Gastrocnemius medialis (tissue), 4 donors: ENCODE measurements at regions of chr6 and their contacts with region 1.

Region 1: DNA sequence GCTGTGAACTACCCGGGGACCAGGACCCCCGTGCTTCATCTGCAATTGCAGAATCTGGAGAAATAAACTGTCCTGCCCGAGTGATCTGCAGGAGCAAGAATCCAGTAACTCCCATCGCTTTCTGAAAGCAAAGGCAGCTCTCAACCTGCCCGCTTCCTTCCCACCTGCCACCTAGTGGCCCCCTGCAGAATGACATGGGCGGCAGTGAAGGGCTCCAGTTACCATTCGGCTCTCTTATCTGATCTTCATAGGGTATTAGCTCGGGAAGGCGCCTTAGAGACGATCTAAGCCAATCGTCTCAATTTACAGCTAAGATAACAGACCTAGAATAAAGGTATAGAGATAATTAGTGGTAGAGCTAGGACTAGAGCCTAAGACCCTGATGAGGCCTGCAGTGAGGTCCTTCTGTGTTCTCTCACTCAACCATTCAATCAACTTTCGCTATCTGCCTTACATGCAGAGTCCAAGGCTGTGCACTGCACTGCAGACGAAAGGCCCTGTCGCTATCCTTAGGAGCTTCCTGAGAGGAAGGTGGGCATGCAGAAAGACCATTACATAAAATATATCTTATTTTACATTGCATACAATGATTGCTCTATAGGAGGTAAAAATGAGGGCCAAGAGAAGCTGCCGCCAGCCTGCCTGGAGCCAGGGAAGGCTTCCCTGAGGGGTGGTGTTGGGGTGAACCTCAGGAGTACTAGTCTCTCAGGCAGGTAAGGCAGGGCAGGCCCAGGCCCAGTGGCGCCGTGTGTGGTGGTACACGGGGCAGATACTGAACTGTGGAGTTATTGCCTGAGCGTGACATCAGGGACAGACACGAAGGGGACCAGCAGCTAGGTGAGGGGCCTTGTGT is 7.1 kb upstream of the PSMG4 start:
- DNase-seq: peak; percentile 51 to 66
- ATAC-seq: peak; percentile 74 to 93
- H3K4me3 ChIP-seq: peak overlapping the region in 2 of 4 donors; percentile 18 to 50
- H3K27ac ChIP-seq: no peak overlapping the region
- H3K4me1 ChIP-seq: peaks cover 8 to 13% of the 10 kb centered on the region in 2 donors
- H3K27me3 ChIP-seq: peaks cover 7 to 29% (median 26%) of the 10 kb centered on the region in 3 donors
- CTCF ChIP-seq: peak; percentile 88 to 96 (median 91)
- POLR2A ChIP-seq: no peak

Region 2: DNA sequence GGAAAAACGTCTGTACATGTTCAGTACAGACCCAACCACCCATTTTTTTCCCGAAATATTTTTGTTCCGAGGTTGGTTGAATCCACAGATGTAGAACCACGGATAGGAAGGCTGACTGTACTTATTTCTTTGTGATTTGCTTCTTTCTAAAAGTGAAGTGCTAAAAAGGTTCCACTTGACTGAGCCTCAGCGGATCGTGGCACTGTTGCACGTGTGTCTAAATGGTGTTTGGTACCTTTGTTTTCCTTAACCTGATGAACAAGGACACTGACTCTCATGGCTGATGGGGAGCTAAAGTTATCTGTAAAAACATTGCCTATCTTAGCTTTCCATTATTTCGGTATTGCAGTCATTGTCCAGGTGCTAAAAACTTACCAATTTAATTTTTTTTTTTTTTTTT is 127.0 kb before region 1 on chr6:
- in situ Hi-C with region 1: loop called (anchors 5 to 10 kb)
- intact Hi-C with region 1: loop called (anchors 1 kb)
- DNase-seq: no peak
- ATAC-seq: no peak
- H3K4me3 ChIP-seq: no peak overlapping the region
- H3K27ac ChIP-seq: no peak overlapping the region
- H3K4me1 ChIP-seq: no peaks in the 10 kb centered on the region
- H3K27me3 ChIP-seq: no peaks in the 10 kb centered on the region
- CTCF ChIP-seq: no peak
- POLR2A ChIP-seq: no peak

Region 3: GRCh38 chr6:3162565-3163247 is 89.0 kb before region 1 on chr6:
- in situ Hi-C with region 1: no loop called
- intact Hi-C with region 1: loop called (anchors 2 kb)
- DNase-seq: peak; percentile 40 to 60
- ATAC-seq: peak; percentile 74 to 82
- H3K4me3 ChIP-seq: peak overlapping the region; percentile 71 to 99 (median 82)
- H3K27ac ChIP-seq: peak overlapping the region; percentile 87 to 91 (median 88)
- H3K4me1 ChIP-seq: peaks cover 4% of the 10 kb centered on the region in 2 donors
- H3K27me3 ChIP-seq: no peaks in the 10 kb centered on the region
- CTCF ChIP-seq: peak in 1 of 5 experiments; percentile 30
- POLR2A ChIP-seq: peak; percentile 36 to 60

Region 4: GRCh38 chr6:3383525-3383924 is 131.8 kb after region 1 on chr6:
- in situ Hi-C with region 1: no loop called
- intact Hi-C with region 1: no loop called
- DNase-seq: no peak
- ATAC-seq: no peak
- H3K4me3 ChIP-seq: no peak overlapping the region
- H3K27ac ChIP-seq: no peak overlapping the region
- H3K4me1 ChIP-seq: peaks cover 15 to 22% of the 10 kb centered on the region in 2 donors
- H3K27me3 ChIP-seq: no peaks in the 10 kb centered on the region
- CTCF ChIP-seq: no peak
- POLR2A ChIP-seq: no peak